Cardiac septum (tissue), 1 donor: ENCODE measurements at regions of chr10 and their contacts with region 1.

Region 1: GRCh38 chr10:24642622-24643417 is 80.9 kb downstream of the ARHGAP21 start:
- DNase-seq: no peak

Region 2: DNA sequence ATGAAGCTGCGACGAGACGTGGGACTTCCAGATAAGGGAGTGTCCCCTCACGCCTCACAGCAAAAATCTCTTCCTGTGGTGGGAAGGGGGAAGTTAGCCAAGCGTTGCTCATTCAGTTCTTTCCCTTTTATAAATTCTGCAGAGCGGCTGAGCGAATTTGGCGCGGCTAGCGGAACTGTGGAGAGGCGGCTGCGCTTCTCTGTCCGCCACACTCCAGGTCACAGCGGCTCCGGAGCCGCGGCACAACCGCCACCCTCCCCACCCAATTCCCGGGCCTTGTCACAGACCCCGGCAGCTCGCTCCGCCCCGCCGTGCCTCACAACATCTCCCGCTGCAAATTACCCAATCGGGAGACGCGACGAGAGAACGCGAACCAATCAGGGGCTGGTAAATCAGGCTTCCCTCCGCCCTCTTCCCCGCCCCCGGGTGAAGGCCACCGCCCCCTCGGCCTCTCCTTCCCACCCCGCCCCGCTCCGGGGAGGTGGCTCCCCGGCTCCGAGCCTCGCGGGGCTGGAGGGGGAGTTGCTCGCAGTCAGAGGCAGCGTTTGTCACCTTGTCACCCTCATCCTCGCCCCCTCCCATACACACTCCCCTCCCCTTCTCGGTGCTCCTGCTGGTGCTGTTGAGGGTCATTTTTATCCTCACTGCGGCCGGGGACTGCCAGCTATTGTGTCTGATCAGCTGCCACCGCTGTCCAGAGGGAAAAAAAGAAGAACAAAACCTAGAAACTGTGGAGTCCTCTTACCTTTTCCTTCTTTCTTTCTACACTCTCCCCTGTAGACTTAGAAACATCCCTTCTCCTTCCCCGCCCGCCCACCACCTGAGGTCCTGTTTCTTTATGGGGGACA is 81.8 kb after region 1 on chr10:
- intact Hi-C with region 1: loop called (anchors 5 kb)
- DNase-seq: peak; percentile 98

Region 3: GRCh38 chr10:24851629-24852028 is 208.8 kb after region 1 on chr10:
- intact Hi-C with region 1: no loop called
- DNase-seq: no peak

Region 4: GRCh38 chr10:24952707-24953645 is 310.2 kb after region 1 on chr10:
- intact Hi-C with region 1: loop called (anchors 5 kb)
- DNase-seq: no peak

Region 5: GRCh38 chr10:24989867-24990266 is 347.0 kb after region 1 on chr10:
- intact Hi-C with region 1: loop called (anchors 10 kb)
- DNase-seq: no peak

Region 6: DNA sequence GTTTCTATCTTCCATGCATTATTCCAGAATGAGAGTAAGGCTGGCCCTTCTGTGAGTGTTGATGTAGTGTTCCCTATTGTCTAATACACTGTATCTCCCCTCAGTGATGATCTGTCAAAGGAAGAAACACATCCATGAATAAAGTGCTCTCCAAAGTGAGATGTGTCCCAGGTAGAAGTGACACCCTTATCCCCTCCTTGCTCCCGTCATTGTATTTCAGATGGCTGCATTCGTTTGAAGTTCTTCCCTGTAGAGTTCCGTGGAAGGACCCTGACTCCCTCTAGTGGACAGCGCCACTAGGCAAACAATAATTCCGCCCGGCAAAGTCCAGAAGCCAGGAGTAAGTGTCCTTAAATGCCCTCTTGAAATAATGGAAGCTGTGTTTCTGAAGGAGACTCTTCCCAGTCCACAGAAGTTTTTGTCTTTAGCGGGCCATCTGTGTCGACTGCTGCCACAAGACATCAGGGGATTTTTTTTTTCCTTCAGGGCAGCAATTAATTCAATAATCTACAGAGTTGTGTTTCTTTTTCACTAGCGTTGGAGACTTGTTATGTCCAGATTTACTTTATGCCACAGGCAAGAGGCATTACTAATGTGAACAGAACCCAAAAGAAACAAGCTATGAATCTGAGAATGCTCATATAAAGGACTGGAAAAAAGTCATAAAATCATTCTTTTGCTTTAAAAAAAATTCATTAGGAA is 438.2 kb after region 1 on chr10:
- intact Hi-C with region 1: loop called (anchors 10 kb)
- DNase-seq: peak; percentile 89